ENCODE measurements at regions of chr15 and their contacts with region 1.

Region 1: DNA sequence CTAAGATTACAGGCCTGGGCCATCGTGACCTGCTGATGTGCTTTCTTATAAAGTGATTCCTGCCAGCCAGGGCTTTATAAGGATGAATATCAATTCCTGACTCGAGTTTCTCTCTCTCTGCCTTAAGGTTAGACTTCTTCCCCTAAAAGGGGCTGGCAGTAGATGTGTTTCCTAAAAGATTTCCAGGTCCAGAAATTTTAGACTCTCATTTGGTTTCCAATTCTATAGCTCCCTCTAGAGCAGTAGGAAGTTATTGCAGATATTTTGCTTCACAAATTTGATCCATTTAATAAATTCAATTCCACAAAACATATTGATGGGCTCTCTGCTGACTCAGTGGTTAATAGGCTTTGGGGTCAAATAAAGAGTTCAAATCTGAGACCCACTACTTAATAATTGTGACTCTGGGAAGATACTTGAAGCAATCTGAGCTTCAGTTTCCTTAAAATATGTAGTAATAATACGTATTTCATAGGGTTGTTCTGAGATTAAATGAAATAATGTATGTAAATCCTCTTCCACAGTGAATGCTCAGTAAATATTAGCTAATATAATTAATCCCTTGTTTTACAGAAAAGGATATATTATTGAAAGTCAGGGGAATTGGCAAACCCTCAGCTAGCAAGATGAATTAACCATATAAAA is 2.1 kb downstream of the TRIM69 start:
- DNase-seq: no peak
- ATAC-seq: peak; percentile 49

Region 2: DNA sequence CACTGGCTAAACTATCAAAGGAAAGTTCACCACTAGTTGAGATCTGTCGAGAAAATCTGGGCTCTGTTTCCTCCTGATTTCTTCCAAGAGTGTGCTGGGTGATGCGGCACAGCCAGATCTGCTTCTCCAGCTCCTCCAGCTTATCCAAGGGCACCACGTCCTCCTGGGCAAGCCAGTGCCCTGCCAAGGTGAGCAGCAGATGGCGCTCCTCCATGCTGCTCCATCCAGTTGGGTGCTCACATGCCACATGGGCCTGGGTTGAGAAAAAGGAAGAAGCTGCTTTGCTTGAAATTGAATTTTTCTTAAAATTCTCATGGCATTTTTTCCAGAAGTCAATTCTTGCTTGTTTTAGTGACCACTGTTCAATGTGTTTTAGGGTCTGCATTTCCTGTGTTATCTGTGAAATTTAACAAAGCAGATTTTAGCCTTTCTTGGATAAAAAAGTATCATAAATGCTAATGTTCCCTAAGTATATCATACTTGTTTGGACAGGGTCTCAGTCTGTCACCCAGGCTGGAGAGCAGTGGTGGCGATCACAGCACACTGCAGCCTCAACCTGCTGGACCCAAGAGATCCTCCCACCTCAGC is 154.2 kb before region 1 on chr15:
- intact Hi-C with region 1: loop called (anchors 10 kb)
- DNase-seq: peak; percentile 57
- ATAC-seq: peak; percentile 78

Region 3: GRCh38 chr15:44663409-44664308 is 74.8 kb before region 1 on chr15 and contains the start of gene SPG11:
- intact Hi-C with region 1: loop called (anchors 5 kb)
- DNase-seq: peak; percentile 98
- ATAC-seq: peak; percentile 99
- total RNA-seq, gene SPG11: 40.9 TPM

Region 4: DNA sequence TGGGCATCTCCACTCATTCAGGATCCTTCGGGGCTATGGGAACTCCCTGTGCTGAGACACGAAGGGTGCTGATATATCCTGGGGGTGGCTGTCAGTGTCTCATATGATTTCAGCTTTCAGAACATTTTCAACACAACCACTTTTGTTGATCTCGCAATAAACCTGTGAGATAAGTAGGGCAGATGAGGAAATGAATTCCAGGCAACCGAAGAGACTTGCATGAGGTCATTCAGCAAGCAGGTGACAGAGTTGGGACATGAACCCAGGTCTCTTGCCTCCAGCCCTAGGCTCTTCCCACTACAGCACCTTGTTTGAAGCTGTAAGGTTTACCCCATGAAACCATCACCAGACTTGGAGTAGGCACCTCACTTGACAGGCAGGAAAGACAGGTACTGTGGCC is 407.9 kb after region 1 on chr15:
- intact Hi-C with region 1: no loop called
- DNase-seq: no peak
- ATAC-seq: no peak

Measured in left ventricle myocardium superior (tissue), 1 donor.